Natural killer cell (primary cell): ENCODE measurements at regions of chr1 and their contacts with region 1.

Region 1: GRCh38 chr1:41432481-41433280 is 51.8 kb downstream of the EDN2 start:
- DNase-seq: peak; percentile 72 to 80
- ATAC-seq: peak; percentile 79 to 98 (median 94)
- H3K4me3 ChIP-seq: no peak overlapping the region
- H3K4me3 Mint-ChIP-seq: no peak overlapping the region
- H3K27ac ChIP-seq: no peak overlapping the region
- H3K27ac Mint-ChIP-seq: no peak overlapping the region
- H3K4me1 ChIP-seq: no peaks in the 10 kb centered on the region
- H3K4me1 Mint-ChIP-seq: peaks cover 0 to 6% of the 10 kb centered on the region in 2 donors
- H3K27me3 ChIP-seq: no peaks in the 10 kb centered on the region
- H3K27me3 Mint-ChIP-seq: peaks cover 25 to 41% of the 10 kb centered on the region in 2 donors
- CTCF ChIP-seq: peak; percentile 85

Region 2: GRCh38 chr1:41268154-41268770 is 164.4 kb before region 1 on chr1:
- intact Hi-C with region 1: loop called (anchors 1 kb)
- DNase-seq: peak; percentile 65 to 79
- ATAC-seq: peak; percentile 70 to 85 (median 83)
- H3K4me3 ChIP-seq: no peak overlapping the region
- H3K4me3 Mint-ChIP-seq: no peak overlapping the region
- H3K27ac ChIP-seq: no peak overlapping the region
- H3K27ac Mint-ChIP-seq: no peak overlapping the region
- H3K4me1 ChIP-seq: peaks cover 3% of the 10 kb centered on the region
- H3K4me1 Mint-ChIP-seq: peaks cover 0 to 9% of the 10 kb centered on the region in 2 donors
- H3K27me3 ChIP-seq: no peaks in the 10 kb centered on the region
- H3K27me3 Mint-ChIP-seq: peaks cover 0 to 5% of the 10 kb centered on the region in 2 donors
- CTCF ChIP-seq: peak; percentile 99

Region 3: GRCh38 chr1:41394959-41395956 is 37.4 kb before region 1 on chr1:
- intact Hi-C with region 1: no loop called
- DNase-seq: no peak
- ATAC-seq: peak; percentile 55 to 79 (median 74)
- H3K4me3 ChIP-seq: no peak overlapping the region
- H3K4me3 Mint-ChIP-seq: peak overlapping the region; percentile 1
- H3K27ac ChIP-seq: no peak overlapping the region
- H3K27ac Mint-ChIP-seq: peak overlapping the region in 1 of 2 donors; percentile 70
- H3K4me1 ChIP-seq: peaks cover 9% of the 10 kb centered on the region
- H3K4me1 Mint-ChIP-seq: peaks cover 10 to 20% of the 10 kb centered on the region in 2 donors
- H3K27me3 ChIP-seq: no peaks in the 10 kb centered on the region
- H3K27me3 Mint-ChIP-seq: peaks cover 23 to 32% of the 10 kb centered on the region in 2 donors
- CTCF ChIP-seq: no peak